ENCODE measurements at regions of chr6 and their contacts with region 1.

Region 1: DNA sequence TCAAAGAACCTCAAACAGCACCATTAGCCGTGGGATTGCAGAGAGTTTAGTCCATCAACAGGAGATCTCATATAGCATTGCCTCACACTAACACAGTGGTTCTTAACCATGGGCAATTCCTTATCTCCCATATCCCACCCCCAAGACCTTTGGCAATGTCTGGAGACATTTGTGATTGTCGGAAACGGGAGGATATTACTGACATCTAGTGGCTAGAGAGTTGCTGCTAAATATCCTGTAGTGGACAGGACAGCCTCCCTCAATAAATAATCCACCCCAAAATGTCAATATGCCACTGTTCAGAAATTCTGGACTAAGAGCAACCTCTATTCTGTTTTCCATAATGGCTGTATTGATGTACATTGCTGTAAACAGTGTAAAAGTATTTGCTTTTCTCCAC is 210.1 kb upstream of the CCN2 start:
- DNase-seq: peak; percentile 29
- ATAC-seq: no peak
- H3K4me3 ChIP-seq: no peak overlapping the region
- H3K4me3 Mint-ChIP-seq: no peak overlapping the region
- H3K27ac ChIP-seq: no peak overlapping the region
- H3K27ac Mint-ChIP-seq: no peak overlapping the region
- H3K4me1 ChIP-seq: peaks cover 0 to 3% of the 10 kb centered on the region in 2 donors
- H3K4me1 Mint-ChIP-seq: peaks cover 20% of the 10 kb centered on the region
- H3K27me3 ChIP-seq: no peaks in the 10 kb centered on the region
- H3K27me3 Mint-ChIP-seq: no peaks in the 10 kb centered on the region
- CTCF ChIP-seq: peak; percentile 22

Region 2: DNA sequence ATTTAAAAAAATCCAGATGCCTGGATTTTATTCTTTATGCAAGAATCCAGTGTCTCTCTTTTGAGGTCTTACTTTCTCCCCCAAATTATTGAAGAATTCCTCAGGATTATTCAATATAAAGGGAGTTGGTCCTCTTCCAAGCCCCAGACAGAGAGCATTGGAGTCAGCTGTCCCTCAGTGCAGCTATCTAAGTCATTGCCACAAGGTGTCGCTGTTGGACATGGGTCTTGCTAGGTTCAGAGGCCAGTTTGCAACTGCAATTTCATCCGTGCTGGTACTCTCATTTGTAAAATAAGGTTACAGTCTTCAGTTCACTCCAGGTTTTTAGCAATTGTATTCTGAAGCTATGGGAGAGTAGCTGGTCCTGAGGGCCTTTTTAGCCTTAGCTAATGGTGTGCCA is 237.9 kb before region 1 on chr6:
- CTCF ChIA-PET with region 1: interaction called, 5 read pairs
- POLR2A ChIA-PET with region 1: no interaction called
- intact Hi-C with region 1: loop called (anchors 1 kb)
- DNase-seq: peak; percentile 62
- ATAC-seq: peak; percentile 53
- H3K4me3 ChIP-seq: no peak overlapping the region
- H3K4me3 Mint-ChIP-seq: no peak overlapping the region
- H3K27ac ChIP-seq: no peak overlapping the region
- H3K27ac Mint-ChIP-seq: no peak overlapping the region
- H3K4me1 ChIP-seq: no peaks in the 10 kb centered on the region
- H3K4me1 Mint-ChIP-seq: no peaks in the 10 kb centered on the region
- H3K27me3 ChIP-seq: peaks cover 0 to 13% (median 0%) of the 10 kb centered on the region in 4 experiments
- H3K27me3 Mint-ChIP-seq: peaks cover 4% of the 10 kb centered on the region
- CTCF ChIP-seq: peak; percentile 67

Region 3: GRCh38 chr6:131949909-131950766 is 211.1 kb before region 1 on chr6:
- CTCF ChIA-PET with region 1: interaction called, 4 read pairs
- POLR2A ChIA-PET with region 1: no interaction called
- intact Hi-C with region 1: loop called (anchors 2 kb)
- DNase-seq: peak; percentile 64
- ATAC-seq: peak; percentile 68
- H3K4me3 ChIP-seq: peak overlapping the region; percentile 15 to 64 (median 57)
- H3K4me3 Mint-ChIP-seq: peak overlapping the region; percentile 93
- H3K27ac ChIP-seq: no peak overlapping the region
- H3K27ac Mint-ChIP-seq: no peak overlapping the region
- H3K4me1 ChIP-seq: peaks cover 11 to 12% of the 10 kb centered on the region in 2 donors
- H3K4me1 Mint-ChIP-seq: peaks cover 25% of the 10 kb centered on the region
- H3K27me3 ChIP-seq: peaks cover 0 to 19% (median 15%) of the 10 kb centered on the region in 4 experiments
- H3K27me3 Mint-ChIP-seq: peaks cover 46% of the 10 kb centered on the region
- CTCF ChIP-seq: peak; percentile 33

Region 4: GRCh38 chr6:132132924-132133639 is 28.2 kb before region 1 on chr6:
- CTCF ChIA-PET with region 1: no interaction called
- POLR2A ChIA-PET with region 1: no interaction called
- intact Hi-C with region 1: no loop called
- DNase-seq: peak; percentile 24
- ATAC-seq: peak; percentile 15
- H3K4me3 ChIP-seq: peak overlapping the region in 3 of 5 experiments; percentile 17 to 55 (median 54)
- H3K4me3 Mint-ChIP-seq: peak overlapping the region; percentile 80
- H3K27ac ChIP-seq: peak overlapping the region; percentile 77 to 91
- H3K27ac Mint-ChIP-seq: peak overlapping the region; percentile 82
- H3K4me1 ChIP-seq: peaks cover 75% of the 10 kb centered on the region in 2 donors
- H3K4me1 Mint-ChIP-seq: peaks cover 70% of the 10 kb centered on the region
- H3K27me3 ChIP-seq: no peaks in the 10 kb centered on the region
- H3K27me3 Mint-ChIP-seq: no peaks in the 10 kb centered on the region
- CTCF ChIP-seq: no peak

Region 5: GRCh38 chr6:132190097-132190814 is 29.0 kb after region 1 on chr6:
- CTCF ChIA-PET with region 1: no interaction called
- POLR2A ChIA-PET with region 1: no interaction called
- intact Hi-C with region 1: no loop called
- DNase-seq: no peak
- ATAC-seq: no peak
- H3K4me3 ChIP-seq: no peak overlapping the region
- H3K4me3 Mint-ChIP-seq: no peak overlapping the region
- H3K27ac ChIP-seq: no peak overlapping the region
- H3K27ac Mint-ChIP-seq: no peak overlapping the region
- H3K4me1 ChIP-seq: no peaks in the 10 kb centered on the region
- H3K4me1 Mint-ChIP-seq: peaks cover 3% of the 10 kb centered on the region
- H3K27me3 ChIP-seq: no peaks in the 10 kb centered on the region
- H3K27me3 Mint-ChIP-seq: no peaks in the 10 kb centered on the region
- CTCF ChIP-seq: no peak

Region 6: GRCh38 chr6:132354512-132355167 is 193.4 kb after region 1 on chr6:
- CTCF ChIA-PET with region 1: no interaction called
- POLR2A ChIA-PET with region 1: no interaction called
- intact Hi-C with region 1: no loop called
- DNase-seq: peak; percentile 94
- ATAC-seq: peak; percentile 87
- H3K4me3 ChIP-seq: peak overlapping the region in 4 of 5 experiments; percentile 10 to 37 (median 17)
- H3K4me3 Mint-ChIP-seq: peak overlapping the region; percentile 67
- H3K27ac ChIP-seq: peak overlapping the region; percentile 89 to 95
- H3K27ac Mint-ChIP-seq: peak overlapping the region; percentile 89
- H3K4me1 ChIP-seq: peaks cover 43 to 63% of the 10 kb centered on the region in 2 donors
- H3K4me1 Mint-ChIP-seq: peaks cover 67% of the 10 kb centered on the region
- H3K27me3 ChIP-seq: no peaks in the 10 kb centered on the region
- H3K27me3 Mint-ChIP-seq: no peaks in the 10 kb centered on the region
- CTCF ChIP-seq: no peak

Measured in B cell (primary cell).